Calu3 (cell line): ENCODE measurements at regions of chr1 and their contacts with region 1.

Region 1: DNA sequence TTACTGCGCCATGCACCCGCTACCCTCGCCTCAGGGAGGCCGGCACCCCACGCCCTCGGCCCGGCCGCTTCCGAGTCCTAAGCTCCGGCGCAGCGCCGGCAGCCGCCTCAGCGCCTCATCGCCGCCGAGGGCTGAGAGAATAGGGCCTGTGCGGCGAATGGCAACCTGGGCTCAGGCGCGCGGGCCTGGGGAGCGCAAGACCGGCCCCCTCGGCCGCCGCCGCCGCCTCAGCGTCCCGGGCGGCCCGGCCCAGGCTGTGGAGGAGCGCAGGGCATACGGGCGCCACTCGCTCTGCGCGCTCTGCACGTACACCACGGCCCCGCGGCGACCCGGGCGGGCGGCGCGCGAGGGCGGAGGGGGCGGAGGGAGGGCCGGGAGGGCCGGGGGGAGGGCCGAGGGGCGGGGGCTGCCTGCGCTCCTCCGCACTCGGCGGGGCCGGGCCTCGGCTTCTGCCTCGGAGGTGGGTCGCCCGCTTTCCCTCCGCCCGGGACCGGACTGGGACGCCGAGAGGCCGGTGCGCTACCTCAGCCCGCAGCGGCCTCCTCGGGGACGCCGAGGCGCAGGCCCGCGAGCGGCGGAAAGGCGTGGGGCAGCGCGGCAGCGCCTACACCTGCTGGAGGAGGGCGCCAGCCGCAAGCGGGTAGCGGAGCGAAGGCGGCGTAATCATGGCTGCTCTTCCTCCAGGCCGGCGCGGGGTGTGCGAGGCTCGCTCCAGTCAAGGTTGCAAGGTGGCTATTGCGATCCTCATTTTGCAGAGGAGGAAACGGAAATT is at the start of gene EGLN1:
- DNase-seq: peak; percentile 90
- H3K4me3 Mint-ChIP-seq: peak within 1 kb of the TSS; percentile 78
- H3K27ac Mint-ChIP-seq: peak within 1 kb of the TSS; percentile 93
- H3K4me1 Mint-ChIP-seq: peaks cover 19% of the 10 kb centered on the region
- H3K27me3 Mint-ChIP-seq: no peaks in the 10 kb centered on the region
- CTCF ChIP-seq: no peak
- total RNA-seq, gene EGLN1: 33.3 and 34.9 TPM in 2 replicates

Region 2: GRCh38 chr1:231170875-231171274 is 251.3 kb before region 1 on chr1:
- CTCF ChIA-PET with region 1: no interaction called
- intact Hi-C with region 1: no loop called
- DNase-seq: no peak
- H3K4me3 Mint-ChIP-seq: no peak overlapping the region
- H3K27ac Mint-ChIP-seq: no peak overlapping the region
- H3K4me1 Mint-ChIP-seq: peaks cover 10% of the 10 kb centered on the region
- H3K27me3 Mint-ChIP-seq: peaks cover 26% of the 10 kb centered on the region
- CTCF ChIP-seq: peak; percentile 36

Region 3: DNA sequence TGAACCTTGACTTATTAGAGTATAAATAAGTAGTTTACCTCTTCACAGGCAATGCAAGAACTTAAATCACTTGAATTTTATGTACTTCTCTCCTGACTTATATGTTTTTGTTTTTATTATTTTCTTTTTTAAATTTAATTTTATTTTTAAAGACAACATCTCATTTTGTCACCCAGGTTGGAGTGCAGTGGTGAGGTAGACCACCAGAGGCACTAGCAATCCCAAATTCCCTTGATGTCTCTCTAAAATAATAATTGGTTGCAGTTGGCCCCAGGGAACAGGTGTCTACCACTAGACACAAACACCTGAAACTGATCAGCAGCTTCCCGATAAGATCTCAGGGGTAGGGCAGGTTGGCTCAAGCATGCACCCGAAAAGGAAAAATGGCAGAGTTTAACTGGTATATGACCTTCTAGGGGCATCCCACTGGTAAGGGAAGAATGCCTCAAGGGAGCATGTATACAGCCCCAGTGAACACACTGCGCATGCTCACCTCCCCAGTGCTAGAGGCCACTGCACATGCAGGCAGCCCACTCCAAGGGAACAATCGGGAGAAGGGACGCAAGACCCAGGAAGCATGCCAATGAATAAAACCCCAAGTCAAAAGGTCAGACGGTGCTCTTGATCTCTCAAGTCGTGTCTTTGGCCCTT is 99.2 kb before region 1 on chr1:
- CTCF ChIA-PET with region 1: no interaction called
- intact Hi-C with region 1: no loop called
- DNase-seq: no peak
- H3K4me3 Mint-ChIP-seq: no peak overlapping the region
- H3K27ac Mint-ChIP-seq: no peak overlapping the region
- H3K4me1 Mint-ChIP-seq: no peaks in the 10 kb centered on the region
- H3K27me3 Mint-ChIP-seq: no peaks in the 10 kb centered on the region
- CTCF ChIP-seq: peak; percentile 32

Region 4: DNA sequence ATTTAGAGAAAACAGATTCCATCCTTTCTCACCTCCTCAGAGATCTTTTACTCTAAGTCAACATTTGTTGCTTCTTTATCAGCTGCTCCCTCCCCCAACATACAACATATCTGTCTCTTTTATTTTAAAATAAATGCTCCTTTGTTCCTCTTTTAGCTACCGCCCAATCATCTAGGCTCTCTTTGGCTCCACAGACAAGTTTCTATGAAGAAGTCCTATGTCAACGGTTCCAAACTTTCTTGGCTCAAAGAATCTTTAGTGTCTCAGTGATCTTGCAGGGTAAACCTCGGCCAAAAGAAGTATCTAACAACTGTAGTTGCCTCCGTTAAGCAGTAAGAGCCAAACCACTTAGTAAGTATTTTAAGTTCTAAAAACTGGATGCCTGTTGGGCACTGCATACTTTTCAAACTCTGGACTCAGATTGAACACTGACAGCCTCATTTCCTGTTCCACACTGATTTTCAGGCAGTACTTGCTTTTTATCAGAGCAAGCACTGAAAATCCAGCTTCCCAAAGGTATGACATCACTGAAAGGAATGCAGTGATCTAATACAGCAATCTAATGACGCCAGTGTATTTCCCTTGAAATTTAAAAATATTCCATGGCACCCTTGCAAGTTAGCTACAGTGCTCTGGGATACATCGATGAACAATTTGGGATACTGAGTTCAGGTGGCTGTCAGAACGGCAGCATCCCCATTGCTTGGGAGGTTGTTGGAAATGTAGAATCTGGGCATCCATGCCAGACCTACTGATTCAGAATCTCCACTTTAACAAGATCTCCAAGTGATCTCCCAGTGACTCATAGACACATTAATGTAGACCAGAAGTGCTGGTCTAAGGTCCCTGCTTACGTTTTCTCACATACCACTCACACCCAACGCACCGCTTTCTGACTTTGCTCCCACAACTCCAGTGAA is 26.8 kb before region 1 on chr1:
- CTCF ChIA-PET with region 1: interaction called, 3 read pairs
- intact Hi-C with region 1: loop called (anchors 2 kb)
- DNase-seq: peak; percentile 47
- H3K4me3 Mint-ChIP-seq: peak overlapping the region; percentile 50
- H3K27ac Mint-ChIP-seq: peak overlapping the region; percentile 78
- H3K4me1 Mint-ChIP-seq: peaks cover 82% of the 10 kb centered on the region
- H3K27me3 Mint-ChIP-seq: no peaks in the 10 kb centered on the region
- CTCF ChIP-seq: no peak

Region 5: DNA sequence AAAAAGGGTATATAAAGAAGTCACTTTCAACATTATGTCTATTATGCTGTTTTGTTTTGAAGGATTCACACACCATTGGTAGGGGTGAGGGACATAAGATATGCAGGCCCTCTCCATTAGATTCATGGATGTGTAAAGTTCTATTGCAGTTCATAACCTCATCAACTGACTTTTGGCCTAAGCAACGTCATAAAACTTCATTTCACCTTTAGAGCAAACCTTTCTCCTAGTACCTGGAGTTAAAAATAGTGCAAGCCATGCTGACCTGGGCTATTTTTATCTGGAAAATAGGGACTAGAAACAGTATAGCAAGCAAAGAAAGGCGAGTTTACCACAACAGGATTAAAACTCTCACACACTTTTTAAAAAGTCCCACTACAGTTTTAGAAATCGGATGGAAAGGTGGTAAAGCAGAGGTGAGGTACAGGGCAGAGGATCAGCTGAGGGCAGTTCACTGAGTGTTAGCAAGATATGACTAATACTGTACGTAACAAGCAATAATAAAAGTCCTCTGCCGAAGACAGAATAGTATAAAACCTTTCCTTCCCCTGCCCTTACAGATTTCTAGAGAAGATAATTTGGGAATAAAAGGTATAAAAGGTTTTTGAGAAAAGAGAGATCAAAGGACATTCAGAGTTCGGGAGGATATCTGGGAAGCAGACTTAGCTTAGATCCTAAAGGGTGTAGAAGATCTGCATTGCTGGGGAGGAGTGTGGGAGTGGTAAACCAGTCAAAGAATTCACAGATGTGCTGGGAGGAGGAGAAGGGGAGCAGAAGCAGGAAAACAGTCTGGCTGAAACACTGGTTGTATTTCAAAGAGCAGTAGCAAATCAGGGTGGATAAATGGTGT is 14.4 kb before region 1 on chr1:
- CTCF ChIA-PET with region 1: interaction called, 3 read pairs
- intact Hi-C with region 1: loop called (anchors 1 kb)
- DNase-seq: no peak
- H3K4me3 Mint-ChIP-seq: no peak overlapping the region
- H3K27ac Mint-ChIP-seq: no peak overlapping the region
- H3K4me1 Mint-ChIP-seq: peaks cover 13% of the 10 kb centered on the region
- H3K27me3 Mint-ChIP-seq: no peaks in the 10 kb centered on the region
- CTCF ChIP-seq: no peak

Region 6: GRCh38 chr1:231528172-231529029 is 106.2 kb after region 1 on chr1 and contains the start of gene TSNAX:
- CTCF ChIA-PET with region 1: interaction called, 3 read pairs
- intact Hi-C with region 1: loop called (anchors 2 kb)
- DNase-seq: peak; percentile 96
- H3K4me3 Mint-ChIP-seq: peak within 1 kb of the TSS; percentile 98
- H3K27ac Mint-ChIP-seq: peak within 1 kb of the TSS; percentile 99
- H3K4me1 Mint-ChIP-seq: peaks cover 26% of the 10 kb centered on the region
- H3K27me3 Mint-ChIP-seq: no peaks in the 10 kb centered on the region
- CTCF ChIP-seq: no peak
- total RNA-seq, gene TSNAX: 55.5 and 56.9 TPM in 2 replicates

Region 7: GRCh38 chr1:231590453-231591198 is 168.4 kb after region 1 on chr1:
- CTCF ChIA-PET with region 1: no interaction called
- intact Hi-C with region 1: loop called (anchors 5 kb)
- DNase-seq: peak; percentile 68
- H3K4me3 Mint-ChIP-seq: no peak overlapping the region
- H3K27ac Mint-ChIP-seq: no peak overlapping the region
- H3K4me1 Mint-ChIP-seq: no peaks in the 10 kb centered on the region
- H3K27me3 Mint-ChIP-seq: no peaks in the 10 kb centered on the region
- CTCF ChIP-seq: peak; percentile 77